PC-9 (cell line): ENCODE measurements at regions of chrX and their contacts with region 1.

Region 1: DNA sequence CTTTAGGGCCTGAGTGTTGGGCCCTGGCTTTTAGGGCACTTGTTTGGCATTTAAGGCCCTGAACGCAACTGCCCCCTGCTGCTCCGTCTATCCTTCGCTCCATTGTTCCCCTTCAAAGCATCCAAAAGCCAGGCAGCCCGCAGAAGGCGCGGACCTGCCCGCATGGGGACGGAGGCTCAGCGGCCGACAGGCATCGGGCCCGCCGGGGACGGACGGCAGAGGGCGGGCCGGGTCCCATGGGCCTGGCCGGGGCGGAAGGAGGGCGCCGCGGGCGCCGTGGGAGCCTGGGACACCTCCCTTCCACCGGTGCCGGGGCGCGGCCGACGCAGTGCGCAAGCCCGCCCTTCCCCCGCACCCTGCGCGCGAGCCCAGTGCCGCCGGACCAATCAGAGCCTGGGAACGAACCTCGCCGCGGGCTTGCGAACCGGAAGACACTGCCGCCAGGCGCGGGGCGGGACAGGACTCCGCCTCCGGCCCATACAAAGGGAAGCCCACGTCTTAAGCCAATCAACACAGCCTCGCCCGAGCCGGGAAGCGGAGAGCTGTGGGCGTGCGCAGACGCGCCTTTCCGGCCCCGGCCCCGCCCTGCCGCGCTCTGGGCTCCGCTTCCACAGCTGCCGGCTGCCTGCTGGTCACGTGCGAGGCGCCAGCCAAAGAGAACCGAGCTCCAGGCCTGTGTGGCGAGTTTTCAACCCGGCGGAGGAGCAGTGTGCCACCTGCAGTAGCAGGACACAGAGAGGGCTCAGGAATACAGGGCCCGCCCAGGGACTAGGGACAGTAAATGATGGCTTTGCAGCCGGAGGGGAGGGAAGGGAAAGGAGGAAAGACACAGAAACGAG is 2.1 kb upstream of the ARHGAP4 start:
- DNase-seq: peak; percentile 92 to 99
- H3K4me3 ChIP-seq: peak overlapping the region; percentile 86
- H3K27ac ChIP-seq: peak overlapping the region; percentile 86
- H3K4me1 ChIP-seq: peaks cover 17% of the 10 kb centered on the region; the same call in 1 of the 2 replicates
- H3K27me3 ChIP-seq: no peaks in the 10 kb centered on the region
- CTCF ChIP-seq: no peak; the same call in 1 of the 2 replicates

Region 2: GRCh38 chrX:153900831-153901752 is 27.0 kb before region 1 on chrX:
- CTCF ChIA-PET with region 1: no interaction called
- POLR2A ChIA-PET with region 1: no interaction called
- intact Hi-C with region 1: loop called (anchors 2 kb)
- DNase-seq: peak; percentile 79 to 83
- H3K4me3 ChIP-seq: no peak overlapping the region
- H3K27ac ChIP-seq: 0 out of 2 replicates have a peak overlapping the region, but pooled peaks have one; percentile 16
- H3K4me1 ChIP-seq: peaks cover 25% of the 10 kb centered on the region
- H3K27me3 ChIP-seq: no peaks in the 10 kb centered on the region
- CTCF ChIP-seq: no peak